Dorsolateral prefrontal cortex (tissue), 120 donors: ENCODE measurements at regions of chr4 and their contacts with region 1.

Region 1: GRCh38 chr4:123396307-123397143 is at the start of gene SPRY1:
- DNase-seq: peak; percentile 35 to 88 (median 78)
- H3K4me3 ChIP-seq: peak within 1 kb of the TSS; percentile 54 to 84 (median 74)
- H3K27ac ChIP-seq: peak within 1 kb of the TSS in 56 of 59 donors; percentile 7 to 92 (median 76)
- H3K27me3 ChIP-seq: peaks cover 0 to 5% (median 0%) of the 10 kb centered on the region in 45 donors
- CTCF ChIP-seq: peak in 6 of 56 donors; percentile 5 to 32 (median 11)
- total RNA-seq, gene SPRY1: 6.6 to 33.5 (median 17.6) TPM

Region 2: DNA sequence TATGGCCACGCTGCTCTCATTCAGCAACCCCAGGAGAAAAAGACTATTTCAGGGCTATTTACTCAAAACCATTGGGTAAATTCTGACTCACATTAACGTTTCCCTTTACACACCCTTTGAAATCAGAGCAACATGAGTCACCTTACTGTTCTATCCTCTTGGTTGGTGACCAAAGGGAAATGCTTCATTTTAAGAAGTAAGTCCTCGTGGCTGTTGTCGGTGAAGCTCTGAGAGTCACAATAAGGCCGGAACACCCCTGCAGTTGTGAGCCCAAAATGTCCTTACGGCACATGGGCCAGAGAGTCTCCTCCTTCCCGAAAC is 56.2 kb before region 1 on chr4:
- intact Hi-C with region 1: no loop called
- DNase-seq: no peak
- H3K4me3 ChIP-seq: no peak overlapping the region
- H3K27ac ChIP-seq: no peak overlapping the region
- H3K27me3 ChIP-seq: no peaks in the 10 kb centered on the region
- CTCF ChIP-seq: no peak

Region 3: DNA sequence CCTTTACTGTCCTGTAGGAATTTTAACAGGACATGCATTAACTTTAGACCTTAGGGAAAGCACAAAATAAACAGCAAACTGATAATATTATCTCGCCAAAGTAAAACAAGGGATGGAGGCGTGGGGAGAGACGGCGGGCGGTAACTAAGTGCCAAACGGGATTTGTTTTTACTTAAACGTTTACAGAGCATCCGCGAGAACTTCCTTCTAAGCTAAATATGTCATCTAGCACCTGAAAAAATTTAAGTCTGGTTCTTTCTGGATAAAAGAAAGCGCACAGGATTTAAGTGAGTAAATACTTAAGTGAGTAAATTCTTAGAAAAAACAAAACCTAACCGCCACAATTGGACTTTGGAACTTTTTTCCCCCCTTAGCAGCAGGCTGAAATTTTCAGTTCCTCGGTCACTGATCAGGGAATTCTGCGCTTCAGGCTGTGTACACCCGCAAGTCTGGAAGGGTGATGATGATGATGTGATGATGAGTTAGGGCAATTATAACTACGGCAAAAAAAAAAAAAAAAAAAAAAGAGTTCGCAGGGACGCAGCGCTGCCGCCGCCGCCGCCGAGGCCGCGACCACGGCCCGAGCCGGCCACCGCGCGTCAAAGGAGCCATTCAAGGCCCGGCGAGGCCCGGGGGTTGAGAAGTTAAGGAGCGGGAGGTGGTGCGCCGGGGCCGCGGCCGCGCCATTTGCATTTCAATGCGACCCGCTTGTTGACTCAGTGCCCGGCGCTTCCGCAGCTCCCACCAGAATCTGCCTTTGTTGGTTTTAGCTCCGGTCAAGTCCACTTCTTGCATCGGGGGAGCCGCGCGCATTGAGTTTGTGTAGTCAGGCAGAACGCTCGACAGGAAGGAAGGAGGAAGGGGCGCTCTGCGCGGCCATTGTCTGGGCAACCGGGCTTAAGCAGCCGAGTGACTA is 108.8 kb after region 1 on chr4:
- intact Hi-C with region 1: loop called in 1 of 2 experiments (anchors 5 kb)
- DNase-seq: peak; percentile 11 to 76 (median 48)
- H3K4me3 ChIP-seq: peak overlapping the region; percentile 37 to 79 (median 65)
- H3K27ac ChIP-seq: peak overlapping the region in 36 of 59 donors; percentile 1 to 78 (median 46)
- H3K27me3 ChIP-seq: peaks cover 0 to 4% (median 0%) of the 10 kb centered on the region in 45 donors
- CTCF ChIP-seq: no peak

Region 4: DNA sequence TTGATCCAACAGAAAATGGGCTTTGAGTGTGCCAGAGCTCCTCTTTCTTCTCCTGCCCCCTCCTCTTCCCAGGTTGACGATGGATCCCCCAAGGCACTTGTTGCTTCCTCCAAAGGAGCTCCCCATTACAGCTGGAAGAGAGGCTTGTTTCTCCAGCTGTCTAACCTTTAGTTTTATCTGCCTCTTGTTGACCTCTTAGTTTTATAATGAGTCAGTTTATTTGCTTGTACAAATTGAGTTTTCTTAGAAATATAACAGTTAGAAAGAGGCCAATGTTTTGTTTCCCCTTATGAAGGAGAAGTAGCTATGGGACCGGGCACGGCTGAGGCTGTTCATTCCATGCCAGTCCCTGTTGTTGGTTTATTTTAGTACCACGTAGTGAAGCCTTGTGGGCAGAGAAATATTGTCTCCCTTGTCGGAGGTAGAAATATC is 158.3 kb after region 1 on chr4:
- intact Hi-C with region 1: loop called in 1 of 2 experiments (anchors 5 kb)
- DNase-seq: no peak
- H3K4me3 ChIP-seq: peak overlapping the region in 4 of 59 donors; percentile 1 to 17 (median 8)
- H3K27ac ChIP-seq: peak overlapping the region in 41 of 59 donors; percentile 3 to 80 (median 43)
- H3K27me3 ChIP-seq: no peaks in the 10 kb centered on the region
- CTCF ChIP-seq: no peak

Region 5: GRCh38 chr4:123649645-123650391 is 253.3 kb after region 1 on chr4:
- intact Hi-C with region 1: loop called in 1 of 2 experiments (anchors 5 kb)
- DNase-seq: no peak
- H3K4me3 ChIP-seq: no peak overlapping the region
- H3K27ac ChIP-seq: peak overlapping the region in 49 of 59 donors; percentile 7 to 82 (median 60)
- H3K27me3 ChIP-seq: no peaks in the 10 kb centered on the region
- CTCF ChIP-seq: no peak

Region 6: DNA sequence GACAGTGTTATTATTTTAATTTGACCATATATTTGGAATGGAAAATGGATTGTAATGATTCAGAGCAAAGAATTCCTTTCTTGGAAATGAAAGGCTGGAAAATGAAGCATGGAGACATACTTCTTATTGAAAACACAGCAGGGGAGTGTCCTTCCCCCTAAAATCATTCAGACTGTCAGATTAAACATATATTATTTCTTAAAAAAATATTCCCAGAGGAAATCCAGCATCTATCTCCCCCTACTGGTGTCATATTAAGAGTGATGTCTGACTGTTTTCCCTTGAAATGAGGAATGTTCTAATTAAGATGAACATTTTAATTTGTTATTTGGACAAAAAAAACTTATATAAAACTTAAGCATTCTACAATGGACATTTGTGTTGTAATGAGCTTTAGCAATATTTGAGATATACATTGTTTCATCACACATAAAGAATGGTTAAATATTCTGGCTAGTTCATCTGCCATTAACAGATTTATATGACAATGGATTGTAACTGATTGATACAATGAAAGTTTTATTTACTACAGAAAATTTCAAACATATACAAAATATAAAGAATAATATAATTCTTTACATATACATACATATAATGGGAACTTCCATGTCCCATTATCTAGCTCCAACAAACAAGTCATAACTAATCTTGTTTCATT is 264.7 kb after region 1 on chr4:
- intact Hi-C with region 1: loop called in 1 of 2 experiments (anchors 10 kb)
- DNase-seq: no peak
- H3K4me3 ChIP-seq: no peak overlapping the region
- H3K27ac ChIP-seq: no peak overlapping the region
- H3K27me3 ChIP-seq: no peaks in the 10 kb centered on the region
- CTCF ChIP-seq: peak; percentile 35 to 77 (median 62)